ENCODE measurements at regions of chr10 and their contacts with region 1.

Region 1: DNA sequence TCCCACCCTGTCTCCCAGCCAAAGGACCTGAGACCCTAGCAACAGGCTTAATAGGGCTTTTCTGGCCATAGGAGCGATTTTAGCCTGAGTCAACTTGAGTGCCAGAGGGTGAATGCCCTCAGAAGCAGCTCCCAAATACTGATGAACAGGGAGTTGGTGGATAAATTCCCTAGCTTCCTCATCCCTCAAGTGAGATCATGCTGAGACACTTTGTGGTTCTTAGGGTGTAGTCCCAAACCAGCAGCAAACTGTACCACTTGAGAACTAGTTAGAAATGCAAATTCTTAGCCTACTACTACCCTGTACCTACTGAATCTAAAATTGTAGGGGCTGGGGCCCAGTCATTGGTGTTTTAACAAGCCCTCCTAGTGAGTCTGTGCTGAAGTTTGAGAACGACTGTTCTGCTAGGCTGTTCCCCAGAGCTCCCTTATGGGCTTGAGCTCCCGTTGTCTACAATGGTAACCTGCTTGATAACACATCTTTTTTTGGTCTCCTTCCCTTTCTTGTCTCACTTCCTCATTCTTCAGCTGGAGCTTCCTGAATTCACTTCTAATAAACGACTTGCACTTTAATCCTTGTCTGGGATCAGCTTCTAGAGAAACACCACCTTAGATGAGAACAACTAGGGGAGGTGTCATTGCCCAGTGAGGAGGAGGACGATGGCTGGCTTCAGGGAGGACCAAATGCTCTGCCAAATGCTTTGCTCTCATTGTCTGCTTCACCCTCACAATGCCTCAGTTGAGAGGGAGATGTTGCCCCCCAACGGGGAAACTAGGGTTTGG is 18.2 kb upstream of the CDH23 start:
- DNase-seq: no peak
- ATAC-seq: peak; percentile 20
- H3K4me3 Mint-ChIP-seq: peak overlapping the region; percentile 24
- H3K27ac Mint-ChIP-seq: peak overlapping the region; percentile 67
- H3K4me1 Mint-ChIP-seq: peaks cover 40% of the 10 kb centered on the region
- H3K27me3 Mint-ChIP-seq: no peaks in the 10 kb centered on the region
- CTCF ChIP-seq: no peak

Region 2: GRCh38 chr10:70967596-70968587 is 410.6 kb before region 1 on chr10:
- CTCF ChIA-PET with region 1: no interaction called
- POLR2A ChIA-PET with region 1: no interaction called
- intact Hi-C with region 1: no loop called
- DNase-seq: no peak
- ATAC-seq: no peak
- H3K4me3 Mint-ChIP-seq: no peak overlapping the region
- H3K27ac Mint-ChIP-seq: no peak overlapping the region
- H3K4me1 Mint-ChIP-seq: no peaks in the 10 kb centered on the region
- H3K27me3 Mint-ChIP-seq: peaks cover 14% of the 10 kb centered on the region
- CTCF ChIP-seq: no peak

Region 3: GRCh38 chr10:71359364-71360046 is 19.0 kb before region 1 on chr10:
- CTCF ChIA-PET with region 1: interaction called, 3 read pairs
- POLR2A ChIA-PET with region 1: interaction called, 12 read pairs
- intact Hi-C with region 1: no loop called
- DNase-seq: no peak
- ATAC-seq: peak; percentile 80
- H3K4me3 Mint-ChIP-seq: no peak overlapping the region
- H3K27ac Mint-ChIP-seq: peak overlapping the region; percentile 72
- H3K4me1 Mint-ChIP-seq: peaks cover 24% of the 10 kb centered on the region
- H3K27me3 Mint-ChIP-seq: no peaks in the 10 kb centered on the region
- CTCF ChIP-seq: no peak

Region 4: GRCh38 chr10:71696628-71697326 is 318.2 kb after region 1 on chr10:
- CTCF ChIA-PET with region 1: interaction called, 5 read pairs
- POLR2A ChIA-PET with region 1: interaction called, 17 read pairs
- intact Hi-C with region 1: loop called (anchors 10 kb)
- DNase-seq: peak; percentile 59
- ATAC-seq: no peak
- H3K4me3 Mint-ChIP-seq: no peak overlapping the region
- H3K27ac Mint-ChIP-seq: no peak overlapping the region
- H3K4me1 Mint-ChIP-seq: peaks cover 63% of the 10 kb centered on the region
- H3K27me3 Mint-ChIP-seq: no peaks in the 10 kb centered on the region
- CTCF ChIP-seq: peak; percentile 27